ENCODE measurements at regions of chr2 and their contacts with region 1.

Region 1: GRCh38 chr2:10688921-10689807 is 611 bp downstream of the NOL10 start:
- DNase-seq: peak; percentile 7
- H3K4me3 Mint-ChIP-seq: no peak overlapping the region
- H3K27ac Mint-ChIP-seq: no peak overlapping the region
- H3K4me1 Mint-ChIP-seq: peaks cover 5% of the 10 kb centered on the region
- H3K27me3 Mint-ChIP-seq: no peaks in the 10 kb centered on the region
- CTCF ChIP-seq: no peak

Region 2: DNA sequence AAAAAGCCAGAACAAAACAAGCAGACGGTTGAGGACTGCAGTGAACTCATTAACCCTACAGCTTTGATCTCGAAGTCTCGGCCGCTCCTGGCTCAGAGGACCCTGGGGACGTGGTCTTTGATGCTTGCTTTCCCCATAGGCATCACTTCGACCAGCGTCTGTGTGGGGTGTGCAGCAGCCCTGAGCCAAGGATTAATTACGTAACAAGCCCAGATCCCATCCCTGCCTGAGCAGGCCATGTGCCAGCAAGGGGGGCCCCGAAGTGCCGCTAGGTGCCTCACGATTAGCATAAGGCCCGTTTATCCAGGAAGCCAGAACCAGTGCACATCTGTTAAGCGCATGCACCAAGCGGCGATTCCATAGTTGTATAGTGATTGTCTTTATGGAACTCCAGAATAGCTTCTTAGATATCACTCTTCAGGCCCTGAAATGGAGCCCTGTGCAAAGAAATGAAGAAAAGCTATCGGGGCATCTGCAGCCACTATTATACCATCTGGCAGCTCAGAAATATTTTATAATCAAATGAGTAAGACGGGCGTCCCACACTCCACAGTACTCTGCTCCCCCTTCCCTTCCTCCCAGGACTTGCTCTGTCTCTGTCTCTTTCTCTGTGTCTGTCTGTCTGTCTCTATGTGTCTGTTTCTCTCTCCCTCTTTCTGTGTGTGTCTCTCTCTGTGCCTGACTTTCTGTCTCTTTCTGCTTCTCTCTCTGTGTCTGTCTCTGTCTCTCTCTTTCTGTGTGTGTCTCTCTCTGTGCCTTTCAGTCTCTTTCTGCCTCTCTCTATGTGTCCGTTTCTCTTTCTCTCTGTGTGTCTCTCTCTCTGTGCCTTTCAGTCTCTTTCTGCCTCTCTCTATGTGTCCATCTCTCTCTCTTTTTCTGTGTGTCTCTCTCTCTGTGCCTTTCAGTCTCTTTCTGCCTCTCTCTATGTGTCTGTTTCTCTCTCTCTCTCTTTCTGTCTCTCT is 344.8 kb before region 1 on chr2:
- CTCF ChIA-PET with region 1: no interaction called
- POLR2A ChIA-PET with region 1: no interaction called
- intact Hi-C with region 1: no loop called
- DNase-seq: no peak
- H3K4me3 Mint-ChIP-seq: no peak overlapping the region
- H3K27ac Mint-ChIP-seq: peak overlapping the region; percentile 20
- H3K4me1 Mint-ChIP-seq: peaks cover 33% of the 10 kb centered on the region
- H3K27me3 Mint-ChIP-seq: no peaks in the 10 kb centered on the region
- CTCF ChIP-seq: no peak

Region 3: GRCh38 chr2:10717613-10718012 is 28.4 kb after region 1 on chr2:
- CTCF ChIA-PET with region 1: interaction called, 3 read pairs
- POLR2A ChIA-PET with region 1: interaction called, 17 read pairs
- intact Hi-C with region 1: no loop called
- DNase-seq: peak; percentile 88
- H3K4me3 Mint-ChIP-seq: no peak overlapping the region
- H3K27ac Mint-ChIP-seq: peak overlapping the region; percentile 59
- H3K4me1 Mint-ChIP-seq: peaks cover 22% of the 10 kb centered on the region
- H3K27me3 Mint-ChIP-seq: peaks cover 14% of the 10 kb centered on the region
- CTCF ChIP-seq: no peak

Measured in MCF 10A (cell line).